Cardiac septum (tissue), 1 donor: ENCODE measurements at regions of chr7 and their contacts with region 1.

Region 1: GRCh38 chr7:117873310-117874190 is at the start of gene CTTNBP2:
- DNase-seq: no peak
- total RNA-seq, gene CTTNBP2: 2.2 TPM

Region 2: DNA sequence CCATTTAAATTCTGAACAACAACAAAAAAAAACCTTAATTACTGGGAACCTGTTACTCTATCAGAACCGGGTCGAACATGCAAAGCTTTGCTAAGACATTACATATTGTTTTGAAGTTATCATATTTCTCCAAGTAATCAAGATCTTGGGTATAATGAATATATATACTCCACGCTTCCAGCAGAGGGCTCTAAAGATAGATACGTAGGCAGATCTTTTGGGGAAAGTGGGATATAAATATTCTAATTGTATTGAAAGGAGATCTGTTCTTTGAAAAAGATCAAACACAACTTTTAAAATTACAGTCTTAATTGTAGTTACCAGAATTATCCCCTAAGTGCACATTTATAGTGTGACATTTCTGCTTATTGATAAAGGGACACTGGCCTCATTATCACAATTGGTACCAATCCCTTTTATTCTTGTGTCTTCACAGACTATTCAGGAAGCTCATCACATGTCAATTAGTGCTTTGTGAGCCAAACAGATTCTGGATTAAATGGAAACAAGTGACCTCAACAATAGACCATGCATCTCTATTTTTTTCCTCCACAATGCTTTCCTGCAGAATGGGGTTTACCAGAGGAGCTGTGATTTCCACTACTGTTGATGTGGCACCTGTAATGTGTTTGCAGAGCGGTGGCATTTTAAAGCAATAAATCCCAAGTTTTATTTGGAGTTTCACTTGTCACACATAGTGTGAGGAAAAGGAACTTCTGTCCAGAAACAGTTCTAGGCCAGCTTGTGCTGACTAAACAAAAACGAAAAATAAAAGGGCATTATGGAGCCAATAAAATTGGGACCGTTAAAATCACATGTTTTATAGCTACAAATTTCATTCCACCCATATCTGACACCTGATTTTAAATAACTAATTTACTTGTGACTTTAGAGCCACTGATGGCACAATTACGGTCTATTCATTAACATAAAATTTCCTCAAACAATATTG is 122.7 kb before region 1 on chr7:
- intact Hi-C with region 1: loop called (anchors 10 kb)
- DNase-seq: no peak

Region 3: GRCh38 chr7:118104812-118105441 is 231.4 kb after region 1 on chr7:
- intact Hi-C with region 1: no loop called
- DNase-seq: no peak

Region 4: DNA sequence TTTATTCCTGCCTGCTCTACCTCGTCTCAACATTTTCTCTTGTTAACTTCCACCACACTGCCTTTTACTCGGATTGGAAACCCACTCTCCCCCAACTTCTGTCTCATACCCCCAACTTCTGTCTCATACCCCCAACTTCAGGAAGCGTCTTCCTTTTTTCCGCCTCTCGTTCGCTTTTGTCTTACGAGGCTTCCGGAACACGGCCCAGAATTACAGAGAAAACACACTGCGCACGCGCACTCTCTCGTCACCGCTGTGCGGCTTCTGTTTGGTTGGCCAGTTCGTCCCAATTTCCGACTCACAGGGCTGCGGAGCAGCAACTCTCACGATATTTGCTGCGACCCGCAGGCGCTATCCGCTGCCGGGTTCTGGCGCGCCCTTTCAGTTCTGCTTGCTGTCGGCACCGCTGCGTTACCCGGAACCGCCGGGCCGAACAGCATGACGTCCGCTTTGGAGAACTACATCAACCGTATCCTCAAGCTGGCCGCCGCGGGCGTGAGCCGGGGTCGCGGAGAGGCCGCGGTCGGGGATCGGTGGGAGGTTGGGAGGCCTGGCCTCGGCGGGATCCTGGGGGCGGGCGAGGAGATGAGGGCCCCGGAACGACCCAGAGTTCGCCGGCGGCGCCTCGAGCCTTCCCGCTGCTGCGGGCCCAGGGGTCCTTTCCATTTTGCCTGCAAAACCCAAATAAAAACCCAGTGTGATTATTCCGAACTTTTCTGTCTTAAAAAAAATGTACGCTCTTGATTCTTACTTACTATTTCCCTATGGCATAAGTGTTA is 310.4 kb after region 1 on chr7 and contains the start of gene LSM8:
- intact Hi-C with region 1: loop called (anchors 5 kb)
- DNase-seq: peak; percentile 99
- total RNA-seq, gene LSM8: 15.6 TPM